Common myeloid progenitor, CD34-positive (primary cell): ENCODE measurements at regions of chr11 and their contacts with region 1.

Region 1: GRCh38 chr11:33893711-33894397 is 2.0 kb upstream of the LMO2 start:
- DNase-seq: peak; percentile 93 to 99 (median 98)
- H3K4me3 ChIP-seq: peak overlapping the region in 6 of 7 experiments; percentile 43 to 85 (median 60)
- H3K27ac ChIP-seq: peak overlapping the region; percentile 71 to 91
- H3K4me1 ChIP-seq: peaks cover 48 to 98% (median 88%) of the 10 kb centered on the region in 4 experiments
- H3K27me3 ChIP-seq: no peaks in the 10 kb centered on the region

Region 2: GRCh38 chr11:33863418-33864172 is 30.3 kb before region 1 on chr11:
- CTCF ChIA-PET with region 1: interaction called, 26 read pairs
- POLR2A ChIA-PET with region 1: interaction called, 9 read pairs
- DNase-seq: no peak
- H3K4me3 ChIP-seq: no peak overlapping the region
- H3K27ac ChIP-seq: peak overlapping the region in 1 of 2 experiments; percentile 47
- H3K4me1 ChIP-seq: peaks cover 14 to 80% (median 41%) of the 10 kb centered on the region in 4 experiments
- H3K27me3 ChIP-seq: no peaks in the 10 kb centered on the region

Region 3: DNA sequence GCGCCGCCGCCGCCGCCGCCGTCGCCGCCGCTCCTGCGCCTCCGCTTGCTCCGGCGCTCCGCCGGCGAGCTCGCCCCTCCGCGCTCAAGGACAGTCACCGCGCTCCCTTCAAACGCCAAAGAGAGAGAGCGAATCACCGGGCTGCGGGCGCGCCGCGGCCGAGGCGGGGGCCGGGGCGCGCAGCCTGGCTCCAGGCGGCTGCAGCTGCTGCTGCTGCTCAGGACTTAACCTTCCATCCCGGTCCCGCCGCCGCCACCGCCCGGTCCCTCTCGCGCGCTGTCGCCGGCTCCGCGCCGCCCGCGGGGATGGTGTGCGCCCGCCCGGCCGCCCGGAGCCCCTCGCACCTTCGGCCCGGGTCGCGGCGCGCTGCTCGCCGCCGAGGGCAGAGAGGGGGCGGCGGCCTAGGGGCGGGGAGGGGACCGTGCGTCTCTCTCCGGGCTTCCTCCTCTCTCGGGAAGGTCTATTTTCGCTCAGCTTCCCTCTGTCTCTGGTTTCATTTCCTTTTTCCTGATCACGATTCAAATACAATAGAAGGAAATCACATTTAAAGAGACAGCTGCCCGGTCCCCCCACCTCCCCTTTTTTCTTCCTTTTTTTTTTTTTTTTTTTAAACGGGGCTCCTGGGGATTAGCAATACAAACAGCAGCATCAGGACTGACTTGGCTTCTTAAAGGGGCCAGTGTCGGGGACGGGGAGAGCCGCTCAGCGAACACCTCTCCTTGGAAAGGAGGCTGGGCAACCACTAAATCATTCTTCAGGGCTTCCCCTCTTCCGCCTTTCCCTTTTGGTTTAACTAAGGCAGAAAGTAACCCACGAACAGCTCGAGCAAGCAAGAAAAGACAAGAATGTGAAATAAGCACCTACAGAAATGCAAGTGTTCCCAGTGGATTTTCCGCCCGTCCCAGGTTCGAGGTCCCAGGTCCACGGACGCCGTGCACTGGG is 24.1 kb before region 1 on chr11:
- CTCF ChIA-PET with region 1: interaction called, 82 read pairs
- POLR2A ChIA-PET with region 1: interaction called, 9 read pairs
- DNase-seq: peak; percentile 67 to 88 (median 88)
- H3K4me3 ChIP-seq: peak overlapping the region; percentile 66 to 94 (median 89)
- H3K27ac ChIP-seq: peak overlapping the region; percentile 72 to 91
- H3K4me1 ChIP-seq: peaks cover 37 to 78% (median 65%) of the 10 kb centered on the region in 4 experiments
- H3K27me3 ChIP-seq: no peaks in the 10 kb centered on the region

Region 4: GRCh38 chr11:33874910-33875490 is 18.9 kb before region 1 on chr11:
- CTCF ChIA-PET with region 1: interaction called, 82 read pairs
- POLR2A ChIA-PET with region 1: interaction called, 9 read pairs
- DNase-seq: no peak
- H3K4me3 ChIP-seq: peak overlapping the region in 2 of 7 experiments; percentile 50 to 52
- H3K27ac ChIP-seq: peak overlapping the region in 1 of 2 experiments; percentile 91
- H3K4me1 ChIP-seq: peaks cover 29 to 91% (median 68%) of the 10 kb centered on the region in 4 experiments
- H3K27me3 ChIP-seq: no peaks in the 10 kb centered on the region

Region 5: DNA sequence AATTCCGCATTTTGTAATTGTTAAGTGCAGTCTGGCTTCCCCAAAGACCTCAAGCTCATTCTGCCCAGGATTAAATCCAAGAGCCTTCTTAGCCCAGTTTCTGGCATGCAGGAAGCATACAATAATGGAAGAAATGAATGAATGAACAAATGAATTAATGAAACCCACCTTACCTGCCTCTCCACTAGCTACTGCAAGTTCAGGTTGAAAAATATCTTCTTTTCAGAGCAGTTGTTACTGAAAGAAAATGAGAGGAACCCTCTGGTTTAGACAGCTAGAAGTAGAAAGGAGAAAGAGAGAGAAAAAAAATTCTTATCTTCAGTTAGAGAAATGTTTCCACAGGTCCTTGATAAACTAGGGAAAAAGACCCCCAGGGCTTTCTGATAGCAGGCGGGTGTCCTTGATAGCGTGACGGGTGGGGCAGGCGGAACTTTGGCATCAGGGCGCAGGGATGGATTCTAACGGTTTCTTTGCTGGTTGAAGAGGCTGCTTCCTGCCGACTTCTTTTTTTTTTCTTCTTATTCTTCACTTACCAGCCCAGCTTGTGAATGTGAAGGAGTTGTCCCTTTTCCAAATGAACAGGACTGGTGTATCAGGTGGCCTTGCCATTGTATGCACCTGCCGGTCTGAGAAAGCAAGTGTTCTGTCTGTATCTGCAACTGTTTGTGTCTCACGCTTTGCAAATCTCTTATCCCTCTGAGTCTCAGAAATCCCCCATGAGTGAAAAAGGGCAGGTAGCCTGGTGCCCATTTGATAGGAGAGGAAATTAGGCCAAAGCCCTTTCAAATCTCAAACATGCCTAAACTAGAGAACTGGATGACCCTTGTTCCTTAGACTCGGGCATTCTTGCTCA is 12.0 kb before region 1 on chr11:
- CTCF ChIA-PET with region 1: interaction called, 82 read pairs
- POLR2A ChIA-PET with region 1: interaction called, 18 read pairs
- DNase-seq: peak in 2 of 3 donors; percentile 44 to 60
- H3K4me3 ChIP-seq: peak overlapping the region in 6 of 7 experiments; percentile 46 to 90 (median 59)
- H3K27ac ChIP-seq: peak overlapping the region; percentile 80 to 91
- H3K4me1 ChIP-seq: peaks cover 31 to 93% (median 75%) of the 10 kb centered on the region in 4 experiments
- H3K27me3 ChIP-seq: no peaks in the 10 kb centered on the region

Region 6: DNA sequence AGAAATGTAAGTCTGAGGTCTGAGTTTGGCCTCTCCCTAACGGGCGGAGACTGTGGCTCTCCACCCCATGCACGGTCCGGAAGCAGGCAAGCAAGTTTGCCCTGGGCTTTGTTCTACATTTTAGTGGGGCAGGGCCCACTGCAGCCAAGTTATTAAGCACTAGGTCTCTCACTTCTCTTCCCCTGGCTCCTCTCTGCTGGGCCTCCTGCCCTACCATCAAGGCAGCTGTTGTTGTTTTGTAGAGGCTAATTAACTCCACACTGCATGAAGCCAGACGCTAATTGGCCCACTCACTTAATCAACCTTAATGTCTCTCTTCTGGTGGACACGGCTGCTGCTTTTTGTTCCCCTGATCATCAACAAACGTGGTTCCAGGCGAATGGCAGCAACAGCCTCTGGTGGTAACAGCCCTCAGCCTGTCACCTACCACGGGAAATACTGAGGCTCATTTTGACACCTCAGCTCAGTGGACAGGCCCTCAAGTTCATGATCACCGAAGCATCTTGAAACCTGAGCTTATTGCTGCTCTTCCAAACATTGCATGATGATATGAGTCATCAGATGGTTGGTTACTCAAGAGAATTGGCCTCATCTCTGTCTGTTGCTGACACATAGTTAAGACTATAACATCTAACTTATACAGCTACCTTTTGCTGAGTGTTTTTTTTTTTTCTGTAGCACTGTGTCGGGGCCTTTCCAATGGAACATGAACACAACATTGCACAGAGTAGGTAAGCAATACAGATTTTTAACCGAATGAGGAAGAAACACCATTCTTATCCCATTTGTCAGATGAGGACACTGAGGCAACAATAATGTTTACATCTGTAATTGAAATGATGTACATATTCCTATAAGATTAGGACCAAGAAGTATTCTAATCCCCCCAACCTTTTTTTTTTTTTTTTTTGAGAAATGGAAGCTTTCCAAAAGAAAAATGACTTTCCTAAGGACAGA is 18.8 kb after region 1 on chr11:
- CTCF ChIA-PET with region 1: interaction called, 20 read pairs
- POLR2A ChIA-PET with region 1: interaction called, 5 read pairs
- DNase-seq: peak; percentile 45 to 91 (median 85)
- H3K4me3 ChIP-seq: peak overlapping the region in 1 of 7 experiments; percentile 6
- H3K27ac ChIP-seq: peak overlapping the region; percentile 12 to 60
- H3K4me1 ChIP-seq: peaks cover 21 to 49% (median 32%) of the 10 kb centered on the region in 4 experiments
- H3K27me3 ChIP-seq: no peaks in the 10 kb centered on the region